ENCODE measurements at regions of chr5 and their contacts with region 1.

Region 1: GRCh38 chr5:154179846-154180710 is 10.5 kb upstream of the GALNT10 start:
- DNase-seq: peak; percentile 64
- H3K4me3 ChIP-seq: no peak overlapping the region; a peak in 1 of 4 replicates
- H3K27ac ChIP-seq: no peak overlapping the region
- H3K4me1 ChIP-seq: no peaks in the 10 kb centered on the region
- H3K27me3 ChIP-seq: no peaks in the 10 kb centered on the region
- CTCF ChIP-seq: peak; percentile 78
- EP300 ChIP-seq: no peak
- RAD21 ChIP-seq: peak; percentile 83

Region 2: GRCh38 chr5:153974131-153974812 is 205.8 kb before region 1 on chr5:
- CTCF ChIA-PET with region 1: interaction called, 33 read pairs
- POLR2A ChIA-PET with region 1: no interaction called
- DNase-seq: peak; percentile 48
- H3K4me3 ChIP-seq: no peak overlapping the region
- H3K27ac ChIP-seq: no peak overlapping the region
- H3K4me1 ChIP-seq: no peaks in the 10 kb centered on the region
- H3K27me3 ChIP-seq: no peaks in the 10 kb centered on the region
- CTCF ChIP-seq: peak; percentile 84
- EP300 ChIP-seq: no peak
- RAD21 ChIP-seq: peak; percentile 90

Region 3: GRCh38 chr5:154058055-154059038 is 121.7 kb before region 1 on chr5:
- CTCF ChIA-PET with region 1: interaction called, 11 read pairs
- POLR2A ChIA-PET with region 1: no interaction called
- DNase-seq: no peak
- H3K4me3 ChIP-seq: no peak overlapping the region
- H3K27ac ChIP-seq: no peak overlapping the region
- H3K4me1 ChIP-seq: no peaks in the 10 kb centered on the region; a peak in 1 of 4 replicates
- H3K27me3 ChIP-seq: no peaks in the 10 kb centered on the region
- CTCF ChIP-seq: no peak
- EP300 ChIP-seq: no peak
- RAD21 ChIP-seq: no peak

Region 4: GRCh38 chr5:154133591-154133990 is 46.5 kb before region 1 on chr5:
- CTCF ChIA-PET with region 1: no interaction called
- POLR2A ChIA-PET with region 1: no interaction called
- DNase-seq: no peak
- H3K4me3 ChIP-seq: no peak overlapping the region
- H3K27ac ChIP-seq: no peak overlapping the region
- H3K4me1 ChIP-seq: no peaks in the 10 kb centered on the region
- H3K27me3 ChIP-seq: no peaks in the 10 kb centered on the region; the same call in 1 of the 2 replicates
- CTCF ChIP-seq: no peak
- EP300 ChIP-seq: no peak
- RAD21 ChIP-seq: no peak

Region 5: GRCh38 chr5:154157483-154158378 is 22.3 kb before region 1 on chr5:
- CTCF ChIA-PET with region 1: interaction called, 32 read pairs
- POLR2A ChIA-PET with region 1: no interaction called
- DNase-seq: no peak
- H3K4me3 ChIP-seq: no peak overlapping the region; a peak in 1 of 4 replicates
- H3K27ac ChIP-seq: no peak overlapping the region
- H3K4me1 ChIP-seq: peaks cover 0 to 5% of the 10 kb centered on the region in 2 experiments; a peak in 1 of 4 replicates
- H3K27me3 ChIP-seq: no peaks in the 10 kb centered on the region
- CTCF ChIP-seq: peak; percentile 51
- EP300 ChIP-seq: no peak
- RAD21 ChIP-seq: no peak

Region 6: GRCh38 chr5:154196955-154197652 is 17.0 kb after region 1 on chr5:
- CTCF ChIA-PET with region 1: interaction called, 48 read pairs
- POLR2A ChIA-PET with region 1: no interaction called
- DNase-seq: peak; percentile 59
- H3K4me3 ChIP-seq: no peak overlapping the region
- H3K27ac ChIP-seq: peak overlapping the region in 1 of 2 experiments; percentile 1; a peak in 1 of 4 replicates
- H3K4me1 ChIP-seq: peaks cover 24 to 45% of the 10 kb centered on the region in 2 experiments
- H3K27me3 ChIP-seq: no peaks in the 10 kb centered on the region
- CTCF ChIP-seq: peak; percentile 51
- EP300 ChIP-seq: no peak
- RAD21 ChIP-seq: peak; percentile 57

Region 7: GRCh38 chr5:154397652-154398406 is 217.8 kb after region 1 on chr5:
- CTCF ChIA-PET with region 1: interaction called, 14 read pairs
- POLR2A ChIA-PET with region 1: no interaction called
- DNase-seq: peak; percentile 79
- H3K4me3 ChIP-seq: no peak overlapping the region
- H3K27ac ChIP-seq: no peak overlapping the region
- H3K4me1 ChIP-seq: peaks cover 0 to 23% of the 10 kb centered on the region in 2 experiments; a peak in 2 of 4 replicates
- H3K27me3 ChIP-seq: no peaks in the 10 kb centered on the region
- CTCF ChIP-seq: no peak
- EP300 ChIP-seq: peak in 1 of 2 experiments; percentile 80; a peak in 2 of 4 replicates
- RAD21 ChIP-seq: no peak

Region 8: GRCh38 chr5:154697371-154697770 is 517.3 kb after region 1 on chr5:
- CTCF ChIA-PET with region 1: no interaction called
- POLR2A ChIA-PET with region 1: no interaction called
- DNase-seq: no peak
- H3K4me3 ChIP-seq: no peak overlapping the region
- H3K27ac ChIP-seq: no peak overlapping the region
- H3K4me1 ChIP-seq: no peaks in the 10 kb centered on the region
- H3K27me3 ChIP-seq: no peaks in the 10 kb centered on the region
- CTCF ChIP-seq: no peak
- EP300 ChIP-seq: no peak
- RAD21 ChIP-seq: no peak

Measured in SK-N-SH (cell line).